Activated CD4-positive, alpha-beta T cell treated with anti-CD3 and anti-CD28 coated beads for 36 hours (primary cell): ENCODE measurements at regions of chr4 and their contacts with region 1.

Region 1: GRCh38 chr4:56681158-56681852 is at the start of gene HOPX:
- DNase-seq: peak; percentile 90
- ATAC-seq: peak; percentile 84
- H3K4me3 Mint-ChIP-seq: peak within 1 kb of the TSS; percentile 51
- H3K27ac Mint-ChIP-seq: peak within 1 kb of the TSS; percentile 61
- H3K4me1 Mint-ChIP-seq: peaks cover 34% of the 10 kb centered on the region
- H3K27me3 Mint-ChIP-seq: peaks cover 28% of the 10 kb centered on the region
- total RNA-seq, gene HOPX: 56.3 to 83.9 TPM

Region 2: DNA sequence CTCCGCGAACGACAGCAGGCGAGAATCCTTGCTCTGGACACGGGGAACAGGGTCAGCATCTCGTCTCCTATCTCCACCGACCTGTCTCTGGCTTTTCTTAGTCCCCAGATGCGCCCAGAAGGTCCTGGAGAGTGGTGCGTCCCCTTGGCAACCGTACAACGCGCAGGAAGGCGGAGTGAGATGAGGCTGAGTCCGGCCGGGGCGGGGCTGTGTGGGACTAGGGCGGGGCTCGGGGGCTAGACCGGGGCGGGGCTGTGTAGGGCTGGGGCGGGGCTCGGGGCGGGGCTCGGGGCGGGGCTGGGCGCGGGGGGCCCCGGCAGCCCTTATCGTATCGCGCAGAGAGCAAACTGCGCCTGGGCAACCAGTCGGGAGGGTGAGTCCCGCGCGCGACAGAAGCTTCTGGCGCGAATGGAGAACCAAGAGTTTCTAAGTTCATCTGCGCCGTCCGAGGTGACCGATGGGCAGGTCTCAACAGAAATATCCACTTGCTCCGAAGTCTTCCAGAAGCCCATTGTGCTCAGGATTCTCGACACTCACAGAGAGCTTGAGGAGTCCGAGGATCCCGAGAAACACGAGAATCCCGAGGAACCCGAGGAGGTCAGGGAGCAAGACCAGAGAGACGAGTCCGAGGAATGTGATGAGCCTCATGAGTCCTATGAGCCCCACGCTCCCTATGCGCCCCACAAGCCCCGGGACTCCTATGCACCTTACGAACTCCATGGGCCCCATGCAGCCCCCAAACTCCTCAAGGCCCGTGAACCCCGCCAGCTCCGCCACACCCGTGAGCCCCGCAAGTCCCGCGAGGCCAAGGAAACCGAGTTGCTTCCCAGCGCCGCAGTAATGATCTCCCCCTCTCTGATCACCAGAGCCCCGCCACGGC is 150.8 kb before region 1 on chr4:
- CTCF ChIA-PET with region 1: no interaction called
- POLR2A ChIA-PET with region 1: no interaction called
- intact Hi-C with region 1: no loop called
- DNase-seq: peak; percentile 92
- ATAC-seq: peak; percentile 99
- H3K4me3 Mint-ChIP-seq: no peak overlapping the region
- H3K27ac Mint-ChIP-seq: peak overlapping the region; percentile 11
- H3K4me1 Mint-ChIP-seq: peaks cover 3% of the 10 kb centered on the region
- H3K27me3 Mint-ChIP-seq: peaks cover 3% of the 10 kb centered on the region

Region 3: DNA sequence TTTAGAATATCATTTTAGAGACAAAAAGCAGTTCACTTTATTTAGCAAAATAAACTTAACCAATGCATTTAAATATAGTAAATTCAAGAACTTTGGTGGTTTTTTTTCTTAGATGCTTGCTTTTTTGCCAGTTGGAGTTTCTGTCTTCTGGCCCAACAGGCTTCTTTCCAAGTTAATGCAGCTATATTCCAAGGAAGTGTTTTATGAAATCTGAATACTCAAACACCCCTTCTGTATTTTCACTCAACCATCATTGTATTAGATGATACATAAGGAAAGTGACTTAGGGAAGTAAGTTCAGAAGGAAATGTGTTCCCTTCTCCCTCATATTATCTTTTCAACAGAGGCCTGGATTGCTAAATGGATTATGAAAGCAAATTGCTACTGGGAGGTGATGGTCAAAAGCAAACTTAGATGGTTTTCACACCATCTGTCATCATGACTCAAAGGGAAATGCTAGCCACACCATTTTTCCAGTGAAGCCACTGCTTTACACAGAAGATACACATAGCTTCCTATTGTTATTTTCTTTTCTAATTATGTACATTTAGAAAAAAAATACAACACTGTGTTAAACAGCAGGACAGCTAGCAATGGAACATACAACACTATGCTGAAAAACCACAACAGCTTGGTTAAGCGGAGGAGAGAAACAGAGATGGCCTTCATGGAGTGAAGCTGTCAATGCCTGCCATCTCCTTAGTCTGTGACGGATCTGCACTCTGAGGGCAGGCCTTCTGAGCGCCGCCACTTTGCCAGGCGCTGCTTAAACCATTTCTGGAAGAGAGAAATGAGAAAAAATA is 33.1 kb before region 1 on chr4:
- CTCF ChIA-PET with region 1: interaction called, 7 read pairs
- POLR2A ChIA-PET with region 1: interaction called, 3 read pairs
- intact Hi-C with region 1: loop called in 1 of 2 experiments (anchors 2 kb)
- DNase-seq: peak; percentile 39
- ATAC-seq: peak; percentile 27
- H3K4me3 Mint-ChIP-seq: no peak overlapping the region
- H3K27ac Mint-ChIP-seq: peak overlapping the region; percentile 70
- H3K4me1 Mint-ChIP-seq: peaks cover 61% of the 10 kb centered on the region
- H3K27me3 Mint-ChIP-seq: no peaks in the 10 kb centered on the region

Region 4: DNA sequence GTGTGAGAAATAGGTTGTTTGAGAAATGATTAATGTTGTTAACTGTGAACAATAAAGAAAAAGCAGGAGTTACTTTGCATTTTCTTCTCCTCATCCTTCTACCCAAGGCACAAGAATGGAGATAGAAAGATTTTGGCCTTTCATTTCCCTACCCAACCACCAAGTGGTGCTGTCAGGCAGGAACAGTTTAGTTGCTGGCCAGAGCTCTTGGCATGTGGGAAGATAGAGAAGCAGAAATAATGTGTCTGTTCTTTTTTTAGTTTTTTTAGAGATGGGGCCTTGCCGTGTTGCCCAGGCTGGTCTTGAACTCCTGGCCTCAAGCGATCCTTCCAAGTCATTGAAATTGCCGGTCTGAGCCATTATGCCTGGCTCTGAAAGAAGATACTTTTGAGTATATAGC is 13.0 kb before region 1 on chr4:
- CTCF ChIA-PET with region 1: interaction called, 19 read pairs
- POLR2A ChIA-PET with region 1: no interaction called
- intact Hi-C with region 1: loop called in 1 of 2 experiments (anchors 1 kb)
- DNase-seq: peak; percentile 50
- ATAC-seq: peak; percentile 58
- H3K4me3 Mint-ChIP-seq: no peak overlapping the region
- H3K27ac Mint-ChIP-seq: no peak overlapping the region
- H3K4me1 Mint-ChIP-seq: no peaks in the 10 kb centered on the region
- H3K27me3 Mint-ChIP-seq: peaks cover 9% of the 10 kb centered on the region

Region 5: DNA sequence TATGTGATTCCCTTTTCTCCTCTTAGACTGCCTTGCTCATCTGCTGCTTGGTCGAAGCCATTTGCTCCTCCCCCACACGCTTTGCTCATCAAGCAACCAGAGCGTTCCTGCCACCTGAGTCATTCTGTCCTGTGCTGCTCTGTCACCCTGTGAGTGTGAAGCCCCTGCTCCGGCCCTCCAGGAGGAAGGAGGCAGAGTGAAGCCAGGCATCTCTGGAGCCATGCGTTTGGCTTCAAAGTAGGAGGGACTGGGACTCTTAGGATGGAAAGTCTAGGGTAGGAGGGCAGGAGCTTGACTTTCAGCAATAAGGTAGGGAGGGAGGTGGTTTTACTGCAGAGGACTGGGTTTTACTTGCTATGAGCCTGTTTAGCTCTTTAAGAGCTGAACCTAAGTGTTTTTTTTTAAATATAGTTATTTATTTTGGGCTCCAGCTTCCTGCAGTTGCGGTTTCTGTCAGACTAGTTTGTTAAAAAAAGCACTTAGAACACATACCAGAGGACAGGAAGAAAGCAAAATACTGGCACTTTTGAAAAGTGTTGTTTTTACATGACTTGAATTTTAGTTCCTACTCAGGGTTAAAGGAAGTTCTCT is 76.6 kb after region 1 on chr4:
- CTCF ChIA-PET with region 1: no interaction called
- POLR2A ChIA-PET with region 1: interaction called, 3 read pairs
- intact Hi-C with region 1: loop called (anchors 1 to 2 kb)
- DNase-seq: peak; percentile 92
- ATAC-seq: peak; percentile 98
- H3K4me3 Mint-ChIP-seq: peak overlapping the region; percentile 49
- H3K27ac Mint-ChIP-seq: peak overlapping the region; percentile 91
- H3K4me1 Mint-ChIP-seq: peaks cover 59% of the 10 kb centered on the region
- H3K27me3 Mint-ChIP-seq: no peaks in the 10 kb centered on the region